Activated CD4-positive, alpha-beta memory T cell treated with anti-CD3 and anti-CD28 coated beads for 36 hours (primary cell): ENCODE measurements at regions of chr17 and their contacts with region 1.

Region 1: GRCh38 chr17:33674685-33675084 is 381.6 kb upstream of the ASIC2 start:
- DNase-seq: peak; percentile 65
- H3K4me3 Mint-ChIP-seq: no peak overlapping the region
- H3K27ac Mint-ChIP-seq: no peak overlapping the region
- H3K4me1 Mint-ChIP-seq: no peaks in the 10 kb centered on the region
- H3K27me3 Mint-ChIP-seq: peaks cover 5% of the 10 kb centered on the region

Region 2: DNA sequence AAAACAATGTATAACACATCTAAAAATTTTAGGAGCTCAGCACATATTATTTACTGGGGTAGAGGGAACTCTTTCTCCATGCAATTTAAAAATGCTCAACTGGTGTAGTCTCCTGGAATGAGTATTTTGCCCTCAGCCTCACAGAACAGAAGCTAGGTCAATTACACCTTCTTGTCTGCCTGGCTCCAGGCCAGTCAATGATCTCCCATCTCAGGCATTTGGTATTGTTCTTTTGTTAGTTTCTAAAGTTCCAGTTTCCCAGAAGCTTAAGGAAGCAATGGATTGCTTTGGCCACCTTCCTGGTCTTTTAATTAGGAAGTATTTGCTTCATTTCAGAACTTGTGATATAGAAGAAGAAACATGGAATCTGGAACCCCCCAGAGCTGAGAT is 21.3 kb before region 1 on chr17:
- CTCF ChIA-PET with region 1: interaction called, 10 read pairs
- POLR2A ChIA-PET with region 1: no interaction called
- intact Hi-C with region 1: no loop called
- DNase-seq: no peak
- H3K4me3 Mint-ChIP-seq: no peak overlapping the region
- H3K27ac Mint-ChIP-seq: no peak overlapping the region
- H3K4me1 Mint-ChIP-seq: no peaks in the 10 kb centered on the region
- H3K27me3 Mint-ChIP-seq: peaks cover 7% of the 10 kb centered on the region

Region 3: DNA sequence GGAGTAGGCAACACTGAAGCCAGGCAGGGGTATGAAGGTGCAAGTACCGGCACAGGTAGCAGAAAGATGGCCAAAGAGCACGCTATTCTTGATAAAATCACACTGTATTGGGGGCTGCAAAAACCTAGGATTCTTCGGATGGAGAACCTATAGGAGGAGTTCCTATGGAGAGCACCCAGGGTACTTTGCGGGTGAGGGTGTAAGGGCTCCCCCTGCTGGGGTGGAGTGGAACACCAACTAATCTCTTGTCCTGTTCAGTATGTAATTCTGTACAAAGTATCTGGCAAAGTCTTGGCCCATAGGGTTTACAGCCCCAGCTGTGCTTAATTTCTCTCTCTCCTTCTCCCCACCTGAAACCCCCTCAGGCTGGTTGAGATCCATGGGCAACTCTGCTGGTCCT is 11.5 kb after region 1 on chr17:
- CTCF ChIA-PET with region 1: interaction called, 11 read pairs
- POLR2A ChIA-PET with region 1: no interaction called
- intact Hi-C with region 1: no loop called
- DNase-seq: peak; percentile 38
- H3K4me3 Mint-ChIP-seq: no peak overlapping the region
- H3K27ac Mint-ChIP-seq: no peak overlapping the region
- H3K4me1 Mint-ChIP-seq: no peaks in the 10 kb centered on the region
- H3K27me3 Mint-ChIP-seq: peaks cover 7% of the 10 kb centered on the region